Activated T-helper 2 cell treated with anti-CD3 and anti-CD28 coated beads, Interferon-gamma antibody, Interleukin-2, Interleukin-4, amounts not matched to agents 10 μg/mL and 5 μg/mL and 100 μg/mL, durations not matched to agents 14 hours and 24 hours and 36 hours (primary cell): ENCODE measurements at regions of chr3 and their contacts with region 1.

Region 1: DNA sequence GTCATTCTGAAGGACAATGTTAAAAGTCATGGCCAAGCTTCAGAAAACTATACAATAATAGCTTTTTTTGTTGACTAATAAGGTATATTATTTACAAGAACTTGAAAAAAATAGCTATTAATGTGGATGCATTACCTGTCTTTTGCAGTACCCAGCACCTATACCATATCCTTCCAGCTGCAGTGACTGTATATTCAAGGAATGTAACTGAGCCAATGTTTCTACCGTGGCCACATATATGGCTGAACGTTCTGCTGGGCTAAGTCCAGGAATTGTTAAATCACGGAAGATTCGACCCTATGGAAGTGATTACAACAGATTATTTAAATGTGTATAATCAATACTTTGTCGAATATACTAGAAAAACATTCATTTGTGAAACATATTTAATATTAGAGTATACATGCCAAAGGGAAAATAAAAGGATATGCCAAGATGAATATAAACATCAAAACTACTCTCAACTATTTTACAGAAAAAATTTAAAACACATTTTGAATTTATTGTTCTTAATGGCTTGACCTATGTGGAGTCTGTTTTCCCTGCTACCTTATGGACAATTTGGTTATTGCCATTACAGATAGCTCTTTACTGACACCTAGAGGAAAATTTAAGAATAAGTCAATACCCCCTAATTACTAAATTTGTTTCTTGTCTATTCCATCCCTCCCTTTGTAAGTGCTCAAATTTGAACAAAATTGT is 17.6 kb downstream of the ACAD11 start:
- DNase-seq: no peak
- H3K4me3 Mint-ChIP-seq: no peak overlapping the region
- H3K27ac Mint-ChIP-seq: no peak overlapping the region
- H3K4me1 Mint-ChIP-seq: peaks cover 5% of the 10 kb centered on the region
- H3K27me3 Mint-ChIP-seq: no peaks in the 10 kb centered on the region

Region 2: GRCh38 chr3:132535575-132536441 is 106.2 kb before region 1 on chr3:
- intact Hi-C with region 1: loop called (anchors 1 kb)
- DNase-seq: peak; percentile 24
- H3K4me3 Mint-ChIP-seq: no peak overlapping the region
- H3K27ac Mint-ChIP-seq: peak overlapping the region; percentile 72
- H3K4me1 Mint-ChIP-seq: peaks cover 22% of the 10 kb centered on the region
- H3K27me3 Mint-ChIP-seq: no peaks in the 10 kb centered on the region

Region 3: GRCh38 chr3:132625613-132626012 is 16.4 kb before region 1 on chr3:
- intact Hi-C with region 1: no loop called
- DNase-seq: no peak
- H3K4me3 Mint-ChIP-seq: no peak overlapping the region
- H3K27ac Mint-ChIP-seq: no peak overlapping the region
- H3K4me1 Mint-ChIP-seq: peaks cover 11% of the 10 kb centered on the region
- H3K27me3 Mint-ChIP-seq: no peaks in the 10 kb centered on the region